Caco-2 (cell line): ENCODE measurements at regions of chr6 and their contacts with region 1.

Region 1: GRCh38 chr6:154510143-154510905 is at the start of gene CNKSR3:
- DNase-seq: peak; percentile 92 to 95
- H3K4me3 ChIP-seq: peak within 1 kb of the TSS; percentile 96
- H3K4me3 Mint-ChIP-seq: peak within 1 kb of the TSS; percentile 93
- H3K27ac Mint-ChIP-seq: peak within 1 kb of the TSS; percentile 86
- H3K4me1 ChIP-seq: peaks cover 42% of the 10 kb centered on the region
- H3K4me1 Mint-ChIP-seq: peaks cover 37% of the 10 kb centered on the region
- H3K27me3 ChIP-seq: no peaks in the 10 kb centered on the region
- H3K27me3 Mint-ChIP-seq: no peaks in the 10 kb centered on the region
- CTCF ChIP-seq: no peak
- total RNA-seq, gene CNKSR3: 31.8 and 33.1 TPM in 2 replicates

Region 2: GRCh38 chr6:154156135-154156896 is 354.0 kb before region 1 on chr6:
- CTCF ChIA-PET with region 1: no interaction called
- POLR2A ChIA-PET with region 1: no interaction called
- intact Hi-C with region 1: loop called (anchors 1 kb)
- DNase-seq: peak; percentile 36 to 55
- H3K4me3 ChIP-seq: no peak overlapping the region
- H3K4me3 Mint-ChIP-seq: no peak overlapping the region
- H3K27ac Mint-ChIP-seq: no peak overlapping the region
- H3K4me1 ChIP-seq: no peaks in the 10 kb centered on the region
- H3K4me1 Mint-ChIP-seq: no peaks in the 10 kb centered on the region
- H3K27me3 ChIP-seq: no peaks in the 10 kb centered on the region
- H3K27me3 Mint-ChIP-seq: no peaks in the 10 kb centered on the region
- CTCF ChIP-seq: peak; percentile 41 to 65

Region 3: GRCh38 chr6:154441995-154442310 is 68.4 kb before region 1 on chr6:
- CTCF ChIA-PET with region 1: no interaction called
- POLR2A ChIA-PET with region 1: interaction called, 3 read pairs
- intact Hi-C with region 1: loop called (anchors 2 kb)
- DNase-seq: no peak
- H3K4me3 ChIP-seq: no peak overlapping the region
- H3K4me3 Mint-ChIP-seq: no peak overlapping the region
- H3K27ac Mint-ChIP-seq: peak overlapping the region; percentile 86
- H3K4me1 ChIP-seq: peaks cover 48% of the 10 kb centered on the region
- H3K4me1 Mint-ChIP-seq: peaks cover 41% of the 10 kb centered on the region
- H3K27me3 ChIP-seq: no peaks in the 10 kb centered on the region
- H3K27me3 Mint-ChIP-seq: no peaks in the 10 kb centered on the region
- CTCF ChIP-seq: no peak

Region 4: GRCh38 chr6:154555073-154555677 is 44.9 kb after region 1 on chr6:
- CTCF ChIA-PET with region 1: no interaction called
- POLR2A ChIA-PET with region 1: interaction called, 3 read pairs
- intact Hi-C with region 1: loop called (anchors 1 kb)
- DNase-seq: peak; percentile 24 to 40
- H3K4me3 ChIP-seq: no peak overlapping the region
- H3K4me3 Mint-ChIP-seq: no peak overlapping the region
- H3K27ac Mint-ChIP-seq: peak overlapping the region; percentile 35
- H3K4me1 ChIP-seq: peaks cover 24% of the 10 kb centered on the region
- H3K4me1 Mint-ChIP-seq: peaks cover 17% of the 10 kb centered on the region
- H3K27me3 ChIP-seq: no peaks in the 10 kb centered on the region
- H3K27me3 Mint-ChIP-seq: no peaks in the 10 kb centered on the region
- CTCF ChIP-seq: no peak

Region 5: DNA sequence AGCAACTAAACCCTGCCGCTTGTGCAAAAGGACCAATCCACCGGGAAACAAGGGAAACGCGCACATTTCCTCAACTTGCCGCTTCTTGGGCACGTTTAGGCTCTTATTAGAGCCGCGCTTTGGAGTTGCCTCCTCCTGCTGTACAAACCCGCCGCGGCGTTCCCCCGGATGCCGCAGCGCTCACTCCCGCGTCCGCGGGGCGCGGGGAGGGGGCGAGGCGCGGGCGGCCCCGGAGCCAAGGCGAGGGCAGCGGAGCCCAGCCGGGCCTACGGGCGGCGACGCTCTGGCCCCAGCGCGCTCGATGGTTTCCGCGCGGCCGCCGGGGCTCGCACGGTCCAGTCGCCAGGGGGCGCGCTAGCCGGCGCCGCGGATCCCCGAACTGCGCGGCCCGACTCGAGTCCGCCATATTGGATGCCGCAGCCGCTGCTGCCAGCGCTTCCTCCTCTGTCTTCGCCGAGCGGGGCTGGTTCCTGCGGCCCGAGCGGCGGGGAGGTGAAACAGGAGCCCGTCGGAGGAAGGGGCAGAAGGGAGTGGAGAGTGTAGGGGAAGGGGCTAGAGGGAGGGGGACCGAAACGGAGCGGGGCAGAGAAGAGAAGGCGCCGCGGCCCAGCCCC is 222.8 kb after region 1 on chr6 and contains the start of gene SCAF8:
- CTCF ChIA-PET with region 1: no interaction called
- POLR2A ChIA-PET with region 1: no interaction called
- intact Hi-C with region 1: loop called (anchors 2 kb)
- DNase-seq: peak; percentile 67 to 92
- H3K4me3 ChIP-seq: peak within 1 kb of the TSS; percentile 92
- H3K4me3 Mint-ChIP-seq: peak within 1 kb of the TSS; percentile 84
- H3K27ac Mint-ChIP-seq: peak within 1 kb of the TSS; percentile 89
- H3K4me1 ChIP-seq: peaks cover 13% of the 10 kb centered on the region
- H3K4me1 Mint-ChIP-seq: peaks cover 12% of the 10 kb centered on the region
- H3K27me3 ChIP-seq: no peaks in the 10 kb centered on the region
- H3K27me3 Mint-ChIP-seq: no peaks in the 10 kb centered on the region
- CTCF ChIP-seq: peak; percentile 53 to 79
- total RNA-seq, gene SCAF8: 45.2 and 45.9 TPM in 2 replicates